Right ventricle myocardium superior (tissue), 1 donor: ENCODE measurements at regions of chr4 and their contacts with region 1.

Region 1: DNA sequence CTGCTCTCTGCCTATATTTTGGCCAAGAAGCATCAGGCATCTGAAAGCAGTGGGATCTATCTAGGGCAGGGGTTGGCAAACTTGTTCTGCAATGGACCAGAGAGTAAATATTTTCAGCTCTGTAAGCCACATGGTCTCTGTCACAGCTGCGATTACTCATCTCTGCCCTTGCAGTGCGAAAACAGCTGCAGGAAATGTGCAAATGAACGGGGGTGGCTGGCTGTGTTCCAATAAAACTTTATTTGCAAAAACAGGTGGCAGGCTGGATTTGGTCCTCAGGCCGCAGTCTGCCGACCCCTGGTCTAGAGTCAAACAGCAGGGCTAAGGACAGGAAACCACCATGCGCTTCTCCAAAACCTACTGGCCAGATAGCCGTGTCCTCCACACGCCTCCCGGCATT is 48.6 kb downstream of the ACOX3 start:
- DNase-seq: no peak
- ATAC-seq: peak; percentile 37

Region 2: GRCh38 chr4:8340781-8341241 is 51.2 kb before region 1 on chr4:
- intact Hi-C with region 1: loop called (anchors 10 kb)
- DNase-seq: peak; percentile 94
- ATAC-seq: peak; percentile 93

Region 3: DNA sequence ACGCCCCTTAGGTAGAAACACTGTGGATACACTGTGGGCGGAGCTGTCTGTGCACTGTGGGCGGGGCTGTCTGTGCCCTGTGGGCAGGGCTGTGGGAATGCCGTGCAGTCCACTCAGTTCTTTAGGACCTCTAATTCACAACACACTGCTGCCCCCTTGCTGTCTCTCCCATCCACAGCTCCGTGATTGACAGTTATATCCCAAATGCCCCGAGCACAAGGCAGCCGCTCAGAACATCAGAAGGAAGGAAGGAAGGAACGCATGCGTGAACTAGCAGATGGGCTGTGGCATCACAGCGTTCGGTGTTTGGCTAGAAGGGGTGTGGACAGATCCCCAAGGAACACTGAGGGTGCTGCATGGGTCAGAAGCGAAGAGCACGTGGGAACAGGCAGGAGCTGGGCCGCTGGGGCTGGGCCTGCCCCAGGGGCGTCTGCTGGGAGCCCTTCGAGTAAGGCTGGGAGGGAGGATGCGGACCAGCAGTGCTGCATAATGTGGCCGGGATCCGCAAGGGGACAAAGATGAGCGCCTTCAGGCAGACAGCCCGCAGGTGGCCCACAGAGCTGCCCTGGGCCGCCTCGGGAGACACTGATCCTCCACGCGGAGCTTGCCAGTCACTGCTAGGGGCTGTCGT is 18.8 kb after region 1 on chr4:
- intact Hi-C with region 1: no loop called
- DNase-seq: peak; percentile 83
- ATAC-seq: peak; percentile 80